BJ (cell line): ENCODE measurements at regions of chr10 and their contacts with region 1.

Region 1: GRCh38 chr10:91632671-91633550 is at the start of gene PPP1R3C:
- DNase-seq: peak; percentile 68
- H3K4me3 ChIP-seq: peak within 1 kb of the TSS; percentile 74
- H3K27me3 ChIP-seq: no peaks in the 10 kb centered on the region
- CTCF ChIP-seq: peak; percentile 55
- polyA plus RNA-seq, gene PPP1R3C: 33.4 and 53.4 TPM in 2 replicates

Region 2: DNA sequence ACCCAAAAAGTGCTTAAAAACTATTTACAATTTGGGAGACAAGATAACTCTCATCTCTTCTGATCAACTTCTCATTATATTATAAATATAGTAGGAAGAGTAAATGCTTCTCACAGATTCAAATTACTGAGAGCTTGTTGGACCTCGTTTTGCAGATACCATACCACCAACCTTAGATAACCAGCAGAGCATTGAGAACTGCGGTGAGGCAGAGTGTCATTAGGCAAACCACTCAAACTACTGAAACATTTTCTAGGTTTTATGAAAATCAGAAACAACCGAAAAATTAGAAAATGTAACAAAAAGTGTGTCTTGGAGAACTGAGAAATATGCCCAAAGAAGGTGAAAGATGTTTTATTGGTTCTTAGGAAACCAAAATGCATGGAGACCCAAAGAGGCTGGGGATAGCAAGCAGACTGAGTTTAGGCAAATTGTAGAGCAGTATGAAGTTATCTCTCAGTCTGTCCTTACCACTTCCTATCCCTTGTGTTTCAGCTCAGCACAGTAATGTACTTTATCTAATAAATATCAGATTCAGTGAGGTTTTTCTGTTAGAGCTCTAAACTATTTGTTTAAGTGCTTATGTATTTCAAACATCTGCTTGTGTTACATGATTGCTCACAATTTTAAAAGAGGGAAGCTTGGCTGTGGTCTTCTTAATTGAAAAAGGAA is 144.9 kb before region 1 on chr10:
- CTCF ChIA-PET with region 1: interaction called, 116 read pairs
- POLR2A ChIA-PET with region 1: no interaction called
- DNase-seq: no peak
- H3K4me3 ChIP-seq: no peak overlapping the region
- H3K27me3 ChIP-seq: no peaks in the 10 kb centered on the region
- CTCF ChIP-seq: no peak

Region 3: DNA sequence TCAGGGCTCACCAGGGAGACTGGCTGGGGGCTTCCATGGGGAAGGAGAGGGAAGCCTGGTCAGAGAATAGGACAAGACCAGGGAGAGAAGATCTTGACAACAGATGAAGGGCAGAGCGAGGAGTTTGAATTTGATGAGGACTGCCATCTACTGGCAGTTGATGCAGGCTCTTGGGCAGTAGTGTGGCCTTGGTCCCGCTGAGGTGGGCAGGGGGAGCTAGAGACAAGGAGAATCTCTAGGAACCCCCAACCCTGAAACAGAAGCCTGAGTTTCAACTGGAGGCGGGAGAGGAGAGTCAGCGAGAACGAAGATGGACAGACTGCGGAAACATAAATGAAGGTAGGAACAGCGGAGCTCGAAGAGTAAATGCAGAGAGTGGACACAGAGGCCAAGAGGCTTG is 81.1 kb before region 1 on chr10:
- CTCF ChIA-PET with region 1: interaction called, 84 read pairs
- POLR2A ChIA-PET with region 1: no interaction called
- DNase-seq: no peak
- H3K4me3 ChIP-seq: no peak overlapping the region
- H3K27me3 ChIP-seq: no peaks in the 10 kb centered on the region
- CTCF ChIP-seq: peak; percentile 74

Region 4: DNA sequence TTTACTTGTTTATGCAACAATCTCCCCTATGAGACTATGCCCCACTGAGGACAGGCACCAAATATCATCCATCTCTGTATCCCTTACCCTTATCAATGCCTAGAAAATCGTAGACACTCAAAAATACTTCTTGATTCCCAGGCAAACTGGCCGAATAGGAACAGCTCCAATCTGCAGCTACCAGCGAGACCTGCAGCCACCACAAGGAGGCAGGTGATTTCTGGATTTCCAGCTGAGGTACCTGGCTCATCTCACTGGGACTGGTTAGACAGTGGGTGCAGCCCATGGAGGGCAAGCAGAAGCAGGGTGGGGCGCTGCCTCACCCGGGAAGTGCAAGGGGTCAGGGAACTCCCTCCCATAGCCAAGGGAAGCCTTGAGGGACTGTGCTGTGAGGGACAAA is 10.8 kb after region 1 on chr10:
- CTCF ChIA-PET with region 1: interaction called, 19 read pairs
- POLR2A ChIA-PET with region 1: no interaction called
- DNase-seq: no peak
- H3K4me3 ChIP-seq: no peak overlapping the region
- H3K27me3 ChIP-seq: no peaks in the 10 kb centered on the region
- CTCF ChIP-seq: peak; percentile 29; the same call in 1 of the 2 replicates

Region 5: DNA sequence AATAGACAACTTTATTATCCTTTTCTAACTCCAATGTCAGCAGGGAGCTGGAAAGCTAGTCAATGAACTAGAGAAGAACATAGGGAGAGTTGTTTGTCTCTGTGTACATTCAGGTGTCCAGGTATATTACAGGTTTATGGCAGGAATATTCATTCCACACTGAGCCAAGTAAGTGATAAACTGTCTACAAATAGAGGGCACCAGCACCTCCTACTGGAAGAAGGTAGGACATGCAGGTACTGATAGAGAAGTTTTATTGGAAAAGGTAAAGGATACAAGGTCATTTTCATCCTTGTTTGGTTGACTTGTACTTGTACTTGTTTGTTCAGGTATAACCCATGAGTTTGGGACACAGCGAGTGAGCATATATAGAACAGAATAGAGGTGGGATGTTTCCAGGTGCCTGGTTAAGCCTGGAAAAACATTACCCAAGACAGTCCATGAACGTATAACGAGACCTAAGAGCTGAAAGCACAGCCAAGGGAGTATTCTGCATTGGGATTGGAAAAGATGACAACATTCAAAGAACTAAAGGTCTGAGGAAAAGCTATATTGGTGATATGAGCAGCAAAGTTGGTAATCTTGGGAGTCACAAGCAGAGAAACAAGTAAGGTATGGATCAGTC is 61.4 kb after region 1 on chr10:
- CTCF ChIA-PET with region 1: interaction called, 65 read pairs
- POLR2A ChIA-PET with region 1: no interaction called
- DNase-seq: no peak
- H3K4me3 ChIP-seq: no peak overlapping the region
- H3K27me3 ChIP-seq: no peaks in the 10 kb centered on the region
- CTCF ChIP-seq: peak; percentile 82